GM13976 (cell line): ENCODE measurements at regions of chr7 and their contacts with region 1.

Region 1: GRCh38 chr7:20598459-20599309 is 16.8 kb upstream of the ABCB5 start:
- DNase-seq: peak; percentile 43
- CTCF ChIP-seq: peak; percentile 50

Region 2: GRCh38 chr7:19754521-19755116 is 844.1 kb before region 1 on chr7:
- in situ Hi-C with region 1: loop called (anchors 10 kb)
- DNase-seq: peak; percentile 16
- CTCF ChIP-seq: peak; percentile 60

Region 3: DNA sequence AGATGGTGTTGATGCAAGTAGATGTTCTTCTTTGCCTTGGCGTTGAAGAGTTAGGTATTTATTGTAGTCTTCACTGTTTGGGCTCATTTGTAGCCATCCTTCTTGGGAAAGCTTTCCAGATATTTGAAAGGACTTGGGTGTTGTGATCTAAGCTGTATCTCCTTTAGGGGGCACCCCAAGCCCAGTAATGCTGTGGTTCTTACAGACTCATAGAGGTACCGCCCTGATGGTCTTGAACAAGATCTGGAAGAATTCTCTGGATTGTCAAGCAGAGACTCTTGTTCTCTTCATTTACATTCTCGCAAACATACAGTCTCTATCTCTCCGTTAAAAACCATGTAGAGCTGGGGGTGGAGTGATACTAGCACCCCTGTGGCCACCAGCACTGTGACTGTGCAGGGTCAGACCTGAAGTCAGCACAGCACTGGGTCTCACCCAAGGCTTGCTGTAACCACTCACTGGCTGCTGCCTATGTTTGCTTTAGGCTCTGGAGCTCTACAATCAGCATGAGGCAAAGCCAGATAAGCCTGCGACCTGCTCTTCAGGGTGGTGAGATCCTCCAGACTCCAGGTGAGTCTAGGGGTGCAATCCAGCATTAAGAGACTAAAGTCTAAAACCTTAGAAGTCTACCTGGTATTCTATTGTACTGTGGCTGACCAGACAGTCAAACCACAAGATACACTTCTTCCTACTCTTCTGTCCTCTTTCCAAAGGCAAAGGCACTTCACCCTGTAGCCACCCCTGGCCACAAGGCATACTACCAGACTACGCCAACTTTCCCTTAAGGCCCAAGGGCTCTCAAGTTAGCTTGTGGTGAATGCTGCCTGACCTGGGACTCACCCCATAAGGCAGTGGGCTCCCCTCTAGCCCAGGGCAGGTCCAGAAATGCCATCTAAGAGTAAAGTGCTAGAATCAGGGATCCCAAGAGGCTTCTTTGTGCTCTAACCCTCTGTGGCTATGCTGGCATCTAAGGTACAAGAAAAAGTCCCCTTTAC is 615.5 kb before region 1 on chr7:
- in situ Hi-C with region 1: loop called (anchors 25 kb)
- DNase-seq: no peak
- CTCF ChIP-seq: no peak

Region 4: GRCh38 chr7:20172736-20173334 is 425.8 kb before region 1 on chr7:
- in situ Hi-C with region 1: loop called (anchors 25 kb)
- DNase-seq: peak; percentile 41
- CTCF ChIP-seq: peak; percentile 13

Region 5: GRCh38 chr7:20310963-20311742 is 287.5 kb before region 1 on chr7:
- in situ Hi-C with region 1: loop called (anchors 25 kb)
- DNase-seq: no peak
- CTCF ChIP-seq: no peak